ENCODE measurements at regions of chr7 and their contacts with region 1.

Region 1: GRCh38 chr7:116180302-116180701 is 30.0 kb upstream of the TES start:
- DNase-seq: peak; percentile 73
- H3K4me3 Mint-ChIP-seq: no peak overlapping the region
- H3K27ac Mint-ChIP-seq: no peak overlapping the region
- H3K4me1 Mint-ChIP-seq: peaks cover 16% of the 10 kb centered on the region
- H3K27me3 Mint-ChIP-seq: no peaks in the 10 kb centered on the region
- CTCF ChIP-seq: peak; percentile 80

Region 2: GRCh38 chr7:115799430-115799829 is 380.9 kb before region 1 on chr7:
- CTCF ChIA-PET with region 1: no interaction called
- POLR2A ChIA-PET with region 1: no interaction called
- intact Hi-C with region 1: no loop called
- DNase-seq: no peak
- H3K4me3 Mint-ChIP-seq: no peak overlapping the region
- H3K27ac Mint-ChIP-seq: no peak overlapping the region
- H3K4me1 Mint-ChIP-seq: no peaks in the 10 kb centered on the region
- H3K27me3 Mint-ChIP-seq: peaks cover 82% of the 10 kb centered on the region
- CTCF ChIP-seq: no peak

Region 3: GRCh38 chr7:116165717-116166116 is 14.6 kb before region 1 on chr7:
- CTCF ChIA-PET with region 1: interaction called, 24 read pairs
- POLR2A ChIA-PET with region 1: no interaction called
- intact Hi-C with region 1: no loop called
- DNase-seq: no peak
- H3K4me3 Mint-ChIP-seq: no peak overlapping the region
- H3K27ac Mint-ChIP-seq: no peak overlapping the region
- H3K4me1 Mint-ChIP-seq: peaks cover 7% of the 10 kb centered on the region
- H3K27me3 Mint-ChIP-seq: peaks cover 7% of the 10 kb centered on the region
- CTCF ChIP-seq: no peak

Region 4: GRCh38 chr7:116195451-116195850 is 15.1 kb after region 1 on chr7:
- CTCF ChIA-PET with region 1: interaction called, 22 read pairs
- POLR2A ChIA-PET with region 1: no interaction called
- intact Hi-C with region 1: no loop called
- DNase-seq: no peak
- H3K4me3 Mint-ChIP-seq: no peak overlapping the region
- H3K27ac Mint-ChIP-seq: no peak overlapping the region
- H3K4me1 Mint-ChIP-seq: peaks cover 6% of the 10 kb centered on the region
- H3K27me3 Mint-ChIP-seq: no peaks in the 10 kb centered on the region
- CTCF ChIP-seq: no peak

Region 5: GRCh38 chr7:116206141-116206540 is 25.8 kb after region 1 on chr7:
- CTCF ChIA-PET with region 1: interaction called, 35 read pairs
- POLR2A ChIA-PET with region 1: interaction called, 92 read pairs
- intact Hi-C with region 1: loop called (anchors 1 kb)
- DNase-seq: no peak
- H3K4me3 Mint-ChIP-seq: no peak overlapping the region
- H3K27ac Mint-ChIP-seq: no peak overlapping the region
- H3K4me1 Mint-ChIP-seq: peaks cover 8% of the 10 kb centered on the region
- H3K27me3 Mint-ChIP-seq: no peaks in the 10 kb centered on the region
- CTCF ChIP-seq: no peak

Region 6: GRCh38 chr7:116218051-116218645 is 37.8 kb after region 1 on chr7:
- CTCF ChIA-PET with region 1: interaction called, 35 read pairs
- POLR2A ChIA-PET with region 1: interaction called, 92 read pairs
- intact Hi-C with region 1: no loop called
- DNase-seq: peak; percentile 62
- H3K4me3 Mint-ChIP-seq: no peak overlapping the region
- H3K27ac Mint-ChIP-seq: peak overlapping the region; percentile 81
- H3K4me1 Mint-ChIP-seq: peaks cover 37% of the 10 kb centered on the region
- H3K27me3 Mint-ChIP-seq: no peaks in the 10 kb centered on the region
- CTCF ChIP-seq: no peak

Region 7: DNA sequence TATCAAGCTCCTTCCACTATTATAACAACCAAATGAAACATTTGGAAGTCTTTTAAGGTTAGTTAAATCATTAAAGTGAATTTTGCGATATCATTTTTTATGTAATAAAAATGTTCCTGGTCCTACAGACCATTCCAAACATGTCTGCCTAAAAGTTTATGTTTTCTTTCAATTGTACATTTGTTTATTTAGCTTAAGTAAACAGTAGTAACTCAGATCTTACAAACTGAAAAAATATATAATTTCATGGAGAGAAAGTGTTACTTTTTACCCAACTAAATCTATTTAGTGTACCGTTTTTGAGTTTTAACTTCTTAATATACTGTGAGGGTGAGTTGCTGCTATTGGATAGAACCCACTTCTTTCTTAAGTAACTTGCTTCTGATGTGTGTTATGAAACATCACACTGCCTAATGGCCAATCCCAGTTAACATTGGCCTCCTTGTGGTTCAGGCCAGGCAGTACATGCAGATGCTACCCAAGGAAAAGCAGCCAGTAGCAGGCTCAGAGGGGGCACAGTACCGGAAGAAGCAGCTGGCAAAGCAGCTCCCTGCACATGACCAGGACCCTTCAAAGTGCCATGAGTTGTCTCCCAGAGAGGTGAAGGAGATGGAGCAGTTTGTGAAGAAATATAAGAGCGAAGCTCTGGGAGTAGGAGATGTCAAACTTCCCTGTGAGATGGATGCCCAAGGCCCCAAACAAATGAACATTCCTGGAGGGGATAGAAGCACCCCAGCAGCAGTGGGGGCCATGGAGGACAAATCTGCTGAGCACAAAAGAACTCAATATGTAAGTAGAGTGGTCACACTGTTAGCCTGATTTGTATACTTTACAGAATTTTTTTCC is 69.6 kb after region 1 on chr7:
- CTCF ChIA-PET with region 1: interaction called, 11 read pairs
- POLR2A ChIA-PET with region 1: interaction called, 6 read pairs
- intact Hi-C with region 1: no loop called
- DNase-seq: peak; percentile 52
- H3K4me3 Mint-ChIP-seq: no peak overlapping the region
- H3K27ac Mint-ChIP-seq: peak overlapping the region; percentile 22
- H3K4me1 Mint-ChIP-seq: peaks cover 24% of the 10 kb centered on the region
- H3K27me3 Mint-ChIP-seq: no peaks in the 10 kb centered on the region
- CTCF ChIP-seq: peak; percentile 33

Measured in MCF 10A (cell line).